Caco-2 (cell line): ENCODE measurements at regions of chr10 and their contacts with region 1.

Region 1: DNA sequence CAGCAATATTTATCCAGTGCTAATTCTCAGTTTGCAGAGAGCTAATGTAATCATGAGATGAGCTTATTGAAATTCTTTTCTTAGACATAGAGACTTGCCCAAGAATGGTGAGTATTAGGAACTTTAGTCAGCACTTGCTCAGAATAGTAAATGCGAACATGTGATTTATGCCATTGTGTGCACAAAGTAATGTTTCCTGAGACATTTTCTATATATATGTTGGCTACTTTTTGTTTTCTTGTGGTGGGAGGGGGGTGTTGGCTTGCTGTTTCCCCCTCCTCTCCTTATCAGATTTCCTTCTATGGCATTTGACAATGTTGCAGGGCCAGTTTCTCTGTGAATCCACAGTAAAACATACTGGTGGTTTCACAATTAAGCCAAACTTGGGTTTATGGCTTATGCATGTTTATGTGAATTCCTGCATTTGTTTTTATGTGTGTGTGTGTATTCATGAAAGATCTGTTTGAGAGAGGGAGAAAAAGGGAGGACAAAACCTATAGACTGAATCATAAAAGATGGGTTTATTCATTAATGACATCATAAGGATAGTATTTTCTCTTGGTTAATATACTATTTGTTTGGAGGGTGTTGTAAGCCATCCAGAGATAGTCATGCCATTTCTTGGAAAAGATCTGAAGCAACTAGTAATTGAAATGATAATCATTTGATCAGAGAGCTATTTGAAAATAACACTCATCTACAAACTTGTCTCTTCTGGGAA is 36.3 kb downstream of the ARID5B start:
- DNase-seq: peak; percentile 78 to 90
- H3K4me3 ChIP-seq: no peak overlapping the region
- H3K4me3 Mint-ChIP-seq: peak overlapping the region; percentile 37
- H3K27ac Mint-ChIP-seq: peak overlapping the region; percentile 33
- H3K4me1 ChIP-seq: peaks cover 88% of the 10 kb centered on the region
- H3K4me1 Mint-ChIP-seq: peaks cover 73% of the 10 kb centered on the region
- H3K27me3 ChIP-seq: no peaks in the 10 kb centered on the region
- H3K27me3 Mint-ChIP-seq: no peaks in the 10 kb centered on the region
- CTCF ChIP-seq: no peak

Region 2: DNA sequence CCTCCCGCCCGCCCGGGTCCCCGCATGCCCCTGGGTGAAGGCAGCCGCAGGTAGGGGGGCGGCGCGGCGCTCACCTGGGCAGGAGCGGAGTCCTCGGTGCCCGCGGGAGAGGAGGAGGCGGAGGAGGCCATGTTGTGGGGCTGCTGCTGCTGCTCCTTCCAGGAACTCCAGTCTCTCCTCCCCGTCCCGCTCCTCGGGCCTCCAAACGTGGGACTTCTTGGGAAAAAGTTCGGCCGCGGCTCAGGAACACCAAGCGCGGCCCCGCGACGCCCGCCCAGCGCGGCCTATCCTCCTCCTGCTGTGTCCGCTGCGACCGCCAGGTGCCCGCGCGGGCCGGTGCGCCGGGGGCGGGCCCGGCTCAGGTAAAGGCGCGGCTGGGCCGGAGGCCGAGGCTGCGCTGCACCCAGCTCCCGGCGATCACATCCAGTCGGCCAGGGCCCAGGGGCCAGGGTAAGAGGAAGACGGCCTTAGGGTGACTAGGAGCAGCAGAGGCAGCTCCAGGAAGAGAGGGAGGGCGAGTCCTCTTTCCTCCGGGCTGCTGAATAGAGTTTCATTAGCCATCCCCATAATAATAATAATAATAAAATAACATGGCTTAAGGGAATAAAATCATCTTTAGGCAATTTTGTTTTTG is 1204.5 kb before region 1 on chr10:
- CTCF ChIA-PET with region 1: no interaction called
- POLR2A ChIA-PET with region 1: no interaction called
- intact Hi-C with region 1: loop called (anchors 2 kb)
- DNase-seq: peak; percentile 87 to 94
- H3K4me3 ChIP-seq: peak overlapping the region; percentile 94
- H3K4me3 Mint-ChIP-seq: peak overlapping the region; percentile 81
- H3K27ac Mint-ChIP-seq: peak overlapping the region; percentile 45
- H3K4me1 ChIP-seq: peaks cover 22% of the 10 kb centered on the region
- H3K4me1 Mint-ChIP-seq: peaks cover 21% of the 10 kb centered on the region
- H3K27me3 ChIP-seq: no peaks in the 10 kb centered on the region
- H3K27me3 Mint-ChIP-seq: no peaks in the 10 kb centered on the region
- CTCF ChIP-seq: peak; percentile 47 to 91

Region 3: GRCh38 chr10:61793760-61794703 is 143.8 kb before region 1 on chr10:
- CTCF ChIA-PET with region 1: no interaction called
- POLR2A ChIA-PET with region 1: no interaction called
- intact Hi-C with region 1: no loop called
- DNase-seq: no peak
- H3K4me3 ChIP-seq: no peak overlapping the region
- H3K4me3 Mint-ChIP-seq: no peak overlapping the region
- H3K27ac Mint-ChIP-seq: no peak overlapping the region
- H3K4me1 ChIP-seq: peaks cover 23% of the 10 kb centered on the region
- H3K4me1 Mint-ChIP-seq: peaks cover 22% of the 10 kb centered on the region
- H3K27me3 ChIP-seq: no peaks in the 10 kb centered on the region
- H3K27me3 Mint-ChIP-seq: no peaks in the 10 kb centered on the region
- CTCF ChIP-seq: no peak

Region 4: DNA sequence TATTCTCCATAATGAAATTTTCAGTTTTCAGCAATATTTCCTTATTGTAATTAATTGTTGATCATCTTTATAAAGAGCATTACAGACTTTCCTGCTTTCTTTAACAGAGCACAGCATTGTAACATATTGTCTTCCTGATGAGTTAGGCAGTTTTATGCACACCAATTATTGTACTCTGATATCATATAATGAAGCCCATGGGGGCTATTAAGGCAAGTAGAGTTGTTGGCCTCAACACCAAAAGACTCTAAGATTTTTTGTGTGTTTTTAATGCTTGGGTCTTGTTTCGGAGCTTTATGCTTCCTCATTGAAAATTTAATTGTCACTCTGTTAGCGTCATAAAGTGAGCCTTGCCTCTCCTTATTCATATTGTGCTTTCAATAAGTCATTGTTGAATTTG is 85.5 kb before region 1 on chr10:
- CTCF ChIA-PET with region 1: no interaction called
- POLR2A ChIA-PET with region 1: no interaction called
- intact Hi-C with region 1: loop called (anchors 1 kb)
- DNase-seq: no peak
- H3K4me3 ChIP-seq: no peak overlapping the region
- H3K4me3 Mint-ChIP-seq: no peak overlapping the region
- H3K27ac Mint-ChIP-seq: peak overlapping the region; percentile 51
- H3K4me1 ChIP-seq: peaks cover 46% of the 10 kb centered on the region
- H3K4me1 Mint-ChIP-seq: peaks cover 44% of the 10 kb centered on the region
- H3K27me3 ChIP-seq: no peaks in the 10 kb centered on the region
- H3K27me3 Mint-ChIP-seq: no peaks in the 10 kb centered on the region
- CTCF ChIP-seq: no peak

Region 5: DNA sequence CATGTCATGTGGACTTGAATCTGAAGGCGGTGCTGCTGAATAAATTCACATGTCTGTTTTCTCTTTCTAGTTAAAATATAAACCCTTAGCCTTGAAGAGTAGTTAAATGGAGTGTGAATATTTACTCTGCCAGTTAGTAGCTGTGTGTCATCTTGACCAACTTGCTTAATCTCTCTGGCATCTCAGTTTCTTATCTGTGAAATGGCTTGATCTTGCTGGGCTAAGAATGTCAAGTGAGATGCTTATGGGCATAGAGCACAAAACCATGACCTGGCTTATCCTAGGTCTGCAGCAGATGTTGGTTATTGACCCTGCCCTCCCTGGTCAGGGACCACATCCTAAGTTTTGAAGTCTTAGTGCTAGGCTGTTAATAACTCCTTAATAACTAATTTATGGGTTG is 19.7 kb before region 1 on chr10:
- CTCF ChIA-PET with region 1: interaction called, 3 read pairs
- POLR2A ChIA-PET with region 1: interaction called, 16 read pairs
- intact Hi-C with region 1: loop called (anchors 1 kb)
- DNase-seq: no peak
- H3K4me3 ChIP-seq: no peak overlapping the region
- H3K4me3 Mint-ChIP-seq: peak overlapping the region; percentile 7
- H3K27ac Mint-ChIP-seq: peak overlapping the region; percentile 57
- H3K4me1 ChIP-seq: peaks cover 64% of the 10 kb centered on the region
- H3K4me1 Mint-ChIP-seq: peaks cover 70% of the 10 kb centered on the region
- H3K27me3 ChIP-seq: no peaks in the 10 kb centered on the region
- H3K27me3 Mint-ChIP-seq: no peaks in the 10 kb centered on the region
- CTCF ChIP-seq: no peak

Region 6: GRCh38 chr10:61952028-61952674 is 14.4 kb after region 1 on chr10:
- CTCF ChIA-PET with region 1: interaction called, 8 read pairs
- POLR2A ChIA-PET with region 1: interaction called, 4 read pairs
- intact Hi-C with region 1: loop called (anchors 1 kb)
- DNase-seq: peak; percentile 87 to 89
- H3K4me3 ChIP-seq: no peak overlapping the region
- H3K4me3 Mint-ChIP-seq: peak overlapping the region; percentile 60
- H3K27ac Mint-ChIP-seq: peak overlapping the region; percentile 67
- H3K4me1 ChIP-seq: peaks cover 54% of the 10 kb centered on the region
- H3K4me1 Mint-ChIP-seq: peaks cover 47% of the 10 kb centered on the region
- H3K27me3 ChIP-seq: no peaks in the 10 kb centered on the region
- H3K27me3 Mint-ChIP-seq: no peaks in the 10 kb centered on the region
- CTCF ChIP-seq: no peak

Region 7: DNA sequence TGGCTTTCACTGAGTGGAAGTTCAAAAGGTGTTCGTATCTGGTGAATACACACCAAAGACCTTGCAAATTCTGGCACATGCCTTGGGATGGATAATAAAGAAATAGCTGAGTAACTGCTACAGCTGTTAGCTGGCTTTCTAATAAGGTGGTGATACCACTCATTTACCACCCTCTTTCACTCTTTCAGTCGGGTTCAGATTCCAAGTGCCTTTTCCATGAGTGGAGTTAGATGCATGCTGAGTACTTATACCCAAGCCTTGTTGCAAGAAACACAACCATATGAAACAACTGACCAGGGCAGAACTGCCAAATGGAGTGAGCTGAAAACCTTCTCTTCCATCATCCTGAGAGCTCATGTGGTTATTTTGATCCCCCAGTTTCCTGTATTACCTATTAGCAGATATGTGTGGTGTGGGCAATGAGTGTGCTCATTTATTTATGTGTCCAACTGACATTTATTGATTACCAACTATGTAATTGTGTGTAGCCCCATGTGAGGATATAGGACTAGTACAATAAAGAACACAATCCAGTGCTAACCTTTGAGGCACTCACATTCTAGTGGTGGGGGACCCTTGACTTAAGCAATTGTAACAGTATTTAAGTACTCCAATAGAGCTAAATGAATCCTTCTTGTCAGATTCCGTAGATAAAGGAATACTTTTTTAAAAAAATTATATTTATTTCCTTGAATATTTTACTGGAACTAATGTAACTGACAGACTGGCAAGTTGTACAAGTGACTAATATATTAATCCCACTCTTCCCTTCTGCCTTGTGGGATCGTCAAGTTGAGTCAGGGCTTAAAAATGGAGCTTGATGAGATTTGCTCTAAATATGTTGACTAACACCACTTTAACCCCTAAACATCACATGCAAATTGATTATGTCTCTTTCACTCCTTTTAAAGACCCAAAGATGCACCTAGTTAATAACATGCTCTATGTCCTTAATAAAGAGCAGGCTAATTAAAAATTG is 88.4 kb after region 1 on chr10:
- CTCF ChIA-PET with region 1: interaction called, 4 read pairs
- POLR2A ChIA-PET with region 1: interaction called, 3 read pairs
- intact Hi-C with region 1: loop called (anchors 1 kb)
- DNase-seq: no peak
- H3K4me3 ChIP-seq: no peak overlapping the region
- H3K4me3 Mint-ChIP-seq: no peak overlapping the region
- H3K27ac Mint-ChIP-seq: peak overlapping the region; percentile 82
- H3K4me1 ChIP-seq: peaks cover 91% of the 10 kb centered on the region
- H3K4me1 Mint-ChIP-seq: peaks cover 90% of the 10 kb centered on the region
- H3K27me3 ChIP-seq: no peaks in the 10 kb centered on the region
- H3K27me3 Mint-ChIP-seq: no peaks in the 10 kb centered on the region
- CTCF ChIP-seq: no peak

Region 8: DNA sequence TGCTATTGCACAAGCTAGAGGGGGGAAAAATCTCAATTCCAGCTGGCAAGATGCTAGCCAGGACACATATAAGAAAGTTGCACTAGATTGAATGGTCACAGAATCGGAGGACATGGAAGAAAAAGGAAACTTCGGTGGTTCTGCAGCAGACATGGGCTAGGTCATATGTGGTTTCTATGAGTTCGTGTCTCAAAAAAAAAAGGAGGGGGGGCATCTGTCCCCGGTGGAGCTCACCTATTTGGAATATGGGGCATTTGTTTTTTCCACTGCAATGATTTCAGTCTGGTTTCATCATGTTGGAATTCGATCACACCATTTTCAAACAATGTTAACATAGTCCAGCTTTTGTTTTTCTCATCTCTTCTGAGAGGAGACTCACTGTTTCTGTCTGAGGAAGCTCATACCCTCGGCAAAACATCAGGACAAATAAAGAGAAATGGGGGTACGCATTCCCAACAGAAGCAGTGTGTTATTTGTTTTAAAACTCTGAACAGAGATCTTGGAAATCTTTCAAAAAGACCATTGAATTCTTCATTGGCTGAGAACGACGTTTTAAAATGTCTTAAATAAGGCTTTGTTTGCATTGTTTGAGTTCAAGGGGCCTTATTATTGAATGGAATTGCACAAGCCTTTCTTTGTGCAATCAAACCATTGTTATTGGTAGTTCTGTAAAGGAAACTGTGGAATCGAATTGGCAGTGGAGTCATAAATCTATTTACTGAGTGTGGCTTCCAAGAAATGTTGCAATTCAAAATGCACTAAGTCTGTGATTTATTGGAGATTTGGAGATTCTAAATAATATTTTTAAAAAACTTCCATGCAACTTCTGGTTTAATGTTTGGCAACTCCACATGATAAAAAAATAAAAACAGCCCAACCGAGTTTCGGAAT is 157.6 kb after region 1 on chr10:
- CTCF ChIA-PET with region 1: no interaction called
- POLR2A ChIA-PET with region 1: no interaction called
- intact Hi-C with region 1: loop called (anchors 1 kb)
- DNase-seq: peak in 1 of 2 experiments; percentile 82
- H3K4me3 ChIP-seq: no peak overlapping the region
- H3K4me3 Mint-ChIP-seq: peak overlapping the region; percentile 35
- H3K27ac Mint-ChIP-seq: peak overlapping the region; percentile 88
- H3K4me1 ChIP-seq: peaks cover 84% of the 10 kb centered on the region
- H3K4me1 Mint-ChIP-seq: peaks cover 70% of the 10 kb centered on the region
- H3K27me3 ChIP-seq: no peaks in the 10 kb centered on the region
- H3K27me3 Mint-ChIP-seq: no peaks in the 10 kb centered on the region
- CTCF ChIP-seq: no peak